ENCODE measurements at regions of chr11 and their contacts with region 1.

Region 1: DNA sequence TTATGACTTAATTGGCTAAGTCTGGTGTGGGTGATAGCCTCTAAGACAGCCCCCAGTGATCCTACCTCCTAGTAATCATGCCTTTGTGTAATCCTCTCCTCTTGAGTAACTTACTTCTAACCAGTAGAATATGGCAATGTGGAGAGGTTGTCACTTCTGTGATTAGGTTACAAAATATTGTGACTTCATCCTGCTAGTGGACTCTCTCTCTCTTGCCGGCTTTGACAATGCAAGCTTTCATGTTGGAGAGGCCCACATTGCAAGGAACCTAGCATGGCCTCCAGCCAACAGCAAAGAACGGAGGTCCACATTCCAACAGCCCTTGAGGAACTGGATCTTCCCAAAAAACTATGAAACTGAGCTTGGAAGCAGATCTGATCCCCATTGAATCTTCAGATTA is 19.5 kb downstream of the YPEL4 start:
- DNase-seq: no peak
- H3K4me3 ChIP-seq: no peak overlapping the region
- H3K27ac ChIP-seq: no peak overlapping the region
- H3K4me1 ChIP-seq: peaks cover 0 to 8% (median 1%) of the 10 kb centered on the region in 4 experiments
- H3K27me3 ChIP-seq: no peaks in the 10 kb centered on the region

Region 2: GRCh38 chr11:57614234-57614772 is 15.9 kb before region 1 on chr11:
- CTCF ChIA-PET with region 1: interaction called, 11 read pairs
- POLR2A ChIA-PET with region 1: no interaction called
- DNase-seq: no peak
- H3K4me3 ChIP-seq: no peak overlapping the region
- H3K27ac ChIP-seq: no peak overlapping the region
- H3K4me1 ChIP-seq: no peaks in the 10 kb centered on the region
- H3K27me3 ChIP-seq: no peaks in the 10 kb centered on the region

Region 3: DNA sequence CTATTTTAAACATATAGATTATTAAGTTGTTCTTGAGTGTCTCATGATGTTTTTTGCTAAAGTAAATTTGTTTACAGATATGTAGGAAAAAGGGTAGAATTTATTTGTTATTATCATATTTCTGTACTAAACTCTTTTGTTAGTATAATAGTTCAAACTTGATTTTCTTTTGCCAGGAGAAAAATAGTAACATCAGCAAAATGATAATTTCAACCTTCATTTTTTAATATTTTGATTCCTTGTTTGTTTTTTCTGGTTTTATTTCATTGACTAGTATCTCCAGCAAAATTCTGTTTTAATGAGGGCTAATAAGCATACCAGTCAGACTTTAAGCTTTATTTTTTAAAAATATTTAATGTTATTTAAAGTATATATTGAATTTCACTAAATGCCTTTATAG is 586.3 kb after region 1 on chr11:
- CTCF ChIA-PET with region 1: no interaction called
- POLR2A ChIA-PET with region 1: no interaction called
- DNase-seq: no peak
- H3K4me3 ChIP-seq: no peak overlapping the region
- H3K27ac ChIP-seq: no peak overlapping the region
- H3K4me1 ChIP-seq: no peaks in the 10 kb centered on the region
- H3K27me3 ChIP-seq: no peaks in the 10 kb centered on the region